ENCODE measurements at regions of chr6 and their contacts with region 1.

Region 1: GRCh38 chr6:26342106-26343004 is 22.6 kb upstream of the BTN3A2 start:
- DNase-seq: no peak
- ATAC-seq: no peak

Region 2: GRCh38 chr6:26594730-26595632 is 252.6 kb after region 1 on chr6:
- intact Hi-C with region 1: loop called (anchors 5 kb)
- DNase-seq: no peak
- ATAC-seq: no peak

Region 3: DNA sequence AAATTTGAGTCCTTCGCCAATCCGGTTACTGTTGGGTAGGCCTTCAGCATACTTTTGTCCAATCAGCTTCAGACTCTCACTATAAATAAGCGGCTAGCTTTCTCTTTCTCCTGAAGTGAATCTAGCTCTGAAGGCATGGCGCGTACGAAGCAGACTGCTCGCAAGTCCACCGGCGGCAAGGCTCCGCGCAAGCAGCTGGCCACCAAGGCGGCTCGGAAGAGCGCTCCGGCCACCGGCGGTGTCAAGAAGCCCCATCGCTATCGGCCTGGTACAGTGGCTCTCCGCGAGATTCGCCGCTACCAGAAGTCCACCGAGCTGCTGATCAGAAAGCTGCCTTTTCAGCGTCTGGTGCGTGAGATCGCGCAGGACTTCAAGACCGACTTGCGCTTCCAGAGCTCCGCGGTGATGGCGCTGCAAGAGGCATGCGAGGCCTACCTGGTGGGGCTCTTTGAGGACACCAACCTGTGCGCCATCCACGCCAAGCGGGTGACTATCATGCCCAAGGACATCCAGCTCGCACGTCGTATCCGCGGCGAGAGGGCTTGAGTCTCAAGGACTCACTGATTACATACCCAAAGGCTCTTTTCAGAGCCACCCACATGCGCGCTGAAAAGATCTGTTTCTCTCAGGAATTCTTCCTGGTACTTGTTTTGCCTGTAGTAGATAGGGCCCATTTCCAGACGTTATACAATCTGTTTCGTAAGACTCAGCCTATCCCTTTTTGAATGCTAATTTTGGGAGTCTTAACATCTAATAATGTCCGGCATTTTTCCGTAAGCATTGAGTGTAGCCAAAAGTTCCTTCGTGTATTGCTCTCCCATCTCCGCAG is 1467.8 kb after region 1 on chr6:
- intact Hi-C with region 1: no loop called
- DNase-seq: peak; percentile 69
- ATAC-seq: peak; percentile 85

Measured in Right ventricle myocardium superior (tissue), 1 donor.